Activated CD8-positive, alpha-beta T cell treated with anti-CD3 and anti-CD28 coated beads, Interleukin-2, amount 10 ng/mL, durations not matched to agents 7 days and 5 days (primary cell): ENCODE measurements at regions of chr1 and their contacts with region 1.

Region 1: DNA sequence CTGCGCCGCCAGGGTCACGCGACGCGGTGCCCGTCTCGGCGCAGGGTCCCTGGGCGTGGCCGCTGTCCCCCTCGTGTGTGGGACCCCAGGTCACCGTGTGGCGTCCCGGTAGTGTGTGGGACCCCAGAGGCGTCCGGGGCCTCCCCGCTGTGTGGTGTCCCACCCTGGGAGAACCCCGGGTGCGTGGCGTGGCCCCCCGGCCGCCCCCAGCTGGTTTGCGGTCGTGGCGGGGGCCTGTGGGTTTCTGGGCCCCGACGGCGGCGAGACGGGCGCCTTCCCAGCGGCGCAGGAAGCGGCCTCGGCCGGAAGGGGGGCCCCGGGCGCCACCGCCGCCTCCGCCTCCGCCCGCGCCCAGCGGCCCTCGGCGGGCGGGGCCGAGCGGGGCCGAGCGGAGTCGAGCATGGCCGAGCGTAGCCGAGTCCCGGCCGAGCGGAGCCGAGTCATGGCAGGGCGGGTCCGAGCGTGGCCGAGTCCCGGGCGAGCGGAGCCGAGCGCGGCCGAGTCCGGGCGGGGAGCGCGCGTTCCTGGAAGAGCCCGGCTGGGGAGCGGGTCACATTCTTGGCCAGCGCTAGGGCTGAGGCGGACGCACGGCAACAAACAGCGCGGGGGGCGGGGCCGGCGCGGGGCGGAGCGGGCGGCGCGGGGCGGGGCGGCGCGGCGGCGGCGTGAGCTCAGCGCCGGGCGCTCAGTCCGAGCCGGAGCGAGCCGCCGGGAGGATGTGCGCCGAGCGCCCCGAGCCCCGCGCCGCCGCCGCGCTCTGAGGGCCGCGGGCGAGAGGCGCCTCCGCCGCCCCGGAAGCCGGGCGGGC is 569 bp upstream of the SKI start:
- DNase-seq: peak; percentile 95
- ATAC-seq: peak; percentile 81
- H3K4me3 Mint-ChIP-seq: peak overlapping the region; percentile 49
- H3K27ac Mint-ChIP-seq: peak overlapping the region; percentile 69
- H3K4me1 Mint-ChIP-seq: peaks cover 30% of the 10 kb centered on the region
- H3K27me3 Mint-ChIP-seq: peaks cover 8% of the 10 kb centered on the region

Region 2: GRCh38 chr1:2073382-2074230 is 153.9 kb before region 1 on chr1:
- CTCF ChIA-PET with region 1: no interaction called
- POLR2A ChIA-PET with region 1: no interaction called
- DNase-seq: no peak
- ATAC-seq: no peak
- H3K4me3 Mint-ChIP-seq: no peak overlapping the region
- H3K27ac Mint-ChIP-seq: no peak overlapping the region
- H3K4me1 Mint-ChIP-seq: no peaks in the 10 kb centered on the region
- H3K27me3 Mint-ChIP-seq: no peaks in the 10 kb centered on the region

Region 3: DNA sequence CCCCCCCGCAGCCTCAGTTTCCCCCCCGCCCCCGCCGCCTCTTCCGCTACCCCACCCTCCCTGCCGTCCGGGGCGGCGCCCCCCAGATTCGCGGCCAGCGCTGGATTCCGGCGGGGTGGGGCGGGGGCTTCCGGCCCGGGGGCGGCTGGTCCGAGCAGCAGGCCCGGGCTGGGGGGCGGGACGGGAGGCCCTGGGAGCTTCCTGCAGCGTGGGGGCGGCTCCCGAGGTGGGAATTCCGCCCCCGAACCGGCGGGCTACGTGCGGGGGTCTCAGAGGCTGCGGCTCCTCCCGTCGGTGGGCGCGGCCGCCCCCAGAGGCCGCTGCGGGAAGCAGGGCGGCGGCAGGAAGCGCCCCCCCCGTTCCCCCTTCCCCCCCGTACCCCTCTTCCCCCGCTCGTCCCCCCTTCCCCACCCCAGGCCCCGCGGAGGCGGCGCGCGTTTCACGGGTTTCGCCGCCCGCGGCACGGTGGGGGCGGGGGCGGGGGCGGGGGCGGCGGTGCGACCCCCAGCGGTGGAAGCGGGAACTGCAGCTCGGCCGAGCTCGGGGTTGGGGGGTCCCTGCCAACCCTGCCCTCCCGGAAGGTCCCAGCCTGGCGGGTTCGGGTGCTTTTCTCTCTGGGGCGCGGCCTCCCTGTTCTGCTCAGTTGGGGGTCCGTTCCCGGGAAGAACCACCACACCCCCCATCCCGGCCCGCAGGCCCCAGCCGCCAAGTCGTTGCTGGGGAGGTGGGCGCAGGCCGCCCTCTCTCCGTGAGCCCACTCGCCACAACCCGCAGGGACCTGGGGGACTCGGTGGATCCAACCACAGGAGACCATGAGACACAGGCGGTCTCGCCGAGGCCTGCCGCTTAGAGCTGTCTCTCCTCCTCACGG is 87.5 kb after region 1 on chr1:
- CTCF ChIA-PET with region 1: interaction called, 32 read pairs
- POLR2A ChIA-PET with region 1: interaction called, 5 read pairs
- DNase-seq: peak; percentile 63
- ATAC-seq: peak; percentile 37
- H3K4me3 Mint-ChIP-seq: peak overlapping the region; percentile 53
- H3K27ac Mint-ChIP-seq: peak overlapping the region; percentile 52
- H3K4me1 Mint-ChIP-seq: peaks cover 27% of the 10 kb centered on the region
- H3K27me3 Mint-ChIP-seq: no peaks in the 10 kb centered on the region

Region 4: DNA sequence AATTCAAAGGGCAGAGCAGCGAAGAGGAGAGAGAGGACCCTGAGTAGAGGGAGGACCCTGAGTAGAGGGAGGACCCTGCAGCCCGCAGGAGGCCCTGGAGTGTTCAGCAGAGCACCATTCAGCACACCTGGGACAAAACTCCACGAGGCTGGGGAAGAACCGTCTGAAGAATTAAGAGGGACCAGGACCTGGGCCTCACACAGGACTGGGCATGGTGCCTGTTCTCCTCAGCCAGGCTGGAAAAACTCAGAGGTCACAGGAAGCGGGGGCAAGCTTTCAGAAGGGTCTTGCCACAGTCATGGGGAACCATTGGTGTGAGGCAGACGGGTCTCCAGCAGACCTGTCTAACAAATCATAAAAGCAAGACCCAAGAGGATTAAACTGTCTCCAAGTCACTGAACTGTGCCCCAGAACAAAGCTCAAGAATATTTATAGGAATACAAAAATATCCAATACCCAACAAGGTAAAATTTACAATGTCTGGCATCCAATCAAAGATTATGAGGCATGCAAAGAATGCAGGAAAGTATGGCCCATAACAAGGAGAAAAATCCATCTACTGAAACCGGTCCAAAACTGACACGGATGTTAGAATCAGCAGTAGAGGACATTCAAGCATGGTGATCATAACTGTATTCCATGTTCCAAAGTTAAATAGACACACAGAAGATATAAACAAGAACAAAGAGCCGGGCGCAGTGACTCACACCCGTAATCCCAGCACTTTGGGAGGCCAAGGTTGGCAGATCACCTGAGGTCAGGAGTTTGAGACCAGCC is 133.2 kb after region 1 on chr1:
- CTCF ChIA-PET with region 1: no interaction called
- POLR2A ChIA-PET with region 1: no interaction called
- DNase-seq: no peak
- ATAC-seq: no peak
- H3K4me3 Mint-ChIP-seq: no peak overlapping the region
- H3K27ac Mint-ChIP-seq: no peak overlapping the region
- H3K4me1 Mint-ChIP-seq: no peaks in the 10 kb centered on the region
- H3K27me3 Mint-ChIP-seq: no peaks in the 10 kb centered on the region

Region 5: GRCh38 chr1:2539312-2539907 is 311.9 kb after region 1 on chr1:
- CTCF ChIA-PET with region 1: no interaction called
- POLR2A ChIA-PET with region 1: no interaction called
- DNase-seq: peak; percentile 48
- ATAC-seq: peak; percentile 46
- H3K4me3 Mint-ChIP-seq: no peak overlapping the region
- H3K27ac Mint-ChIP-seq: no peak overlapping the region
- H3K4me1 Mint-ChIP-seq: peaks cover 8% of the 10 kb centered on the region
- H3K27me3 Mint-ChIP-seq: peaks cover 11% of the 10 kb centered on the region